Dendritic cell treated with granulocyte-macrophage colony-stimulating factor and Interleukin-4, amounts not matched to agents 40 ng/mL and 50 ng/mL, for 4 days (primary cell): ENCODE measurements at regions of chrX and their contacts with region 1.

Region 1: GRCh38 chrX:123732670-123733363 is at the start of gene THOC2:
- H3K4me3 Mint-ChIP-seq: peak within 1 kb of the TSS; percentile 99
- H3K27ac Mint-ChIP-seq: peak within 1 kb of the TSS; percentile 94
- H3K4me1 Mint-ChIP-seq: peaks cover 22% of the 10 kb centered on the region
- H3K27me3 Mint-ChIP-seq: no peaks in the 10 kb centered on the region

Region 2: DNA sequence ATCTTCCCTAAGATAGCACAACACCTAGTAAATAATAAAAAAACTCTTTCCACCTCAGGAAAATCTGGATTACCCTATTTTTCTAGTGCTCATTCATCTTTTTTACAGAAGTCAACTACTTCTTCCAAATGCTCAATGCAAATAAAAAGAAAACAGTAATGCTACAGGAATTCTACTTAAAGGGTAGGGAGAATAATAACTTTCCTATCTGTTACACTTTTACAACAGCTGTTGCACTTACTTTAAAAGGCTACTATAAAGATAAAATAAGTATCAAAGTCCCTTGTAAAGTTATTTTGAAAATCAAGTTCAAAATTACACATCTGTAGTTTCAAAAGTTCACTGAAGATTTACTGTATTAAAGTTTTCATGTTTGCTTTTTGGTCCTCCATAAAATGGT is 37.6 kb before region 1 on chrX:
- intact Hi-C with region 1: no loop called
- H3K4me3 Mint-ChIP-seq: no peak overlapping the region
- H3K27ac Mint-ChIP-seq: no peak overlapping the region
- H3K4me1 Mint-ChIP-seq: no peaks in the 10 kb centered on the region
- H3K27me3 Mint-ChIP-seq: no peaks in the 10 kb centered on the region

Region 3: DNA sequence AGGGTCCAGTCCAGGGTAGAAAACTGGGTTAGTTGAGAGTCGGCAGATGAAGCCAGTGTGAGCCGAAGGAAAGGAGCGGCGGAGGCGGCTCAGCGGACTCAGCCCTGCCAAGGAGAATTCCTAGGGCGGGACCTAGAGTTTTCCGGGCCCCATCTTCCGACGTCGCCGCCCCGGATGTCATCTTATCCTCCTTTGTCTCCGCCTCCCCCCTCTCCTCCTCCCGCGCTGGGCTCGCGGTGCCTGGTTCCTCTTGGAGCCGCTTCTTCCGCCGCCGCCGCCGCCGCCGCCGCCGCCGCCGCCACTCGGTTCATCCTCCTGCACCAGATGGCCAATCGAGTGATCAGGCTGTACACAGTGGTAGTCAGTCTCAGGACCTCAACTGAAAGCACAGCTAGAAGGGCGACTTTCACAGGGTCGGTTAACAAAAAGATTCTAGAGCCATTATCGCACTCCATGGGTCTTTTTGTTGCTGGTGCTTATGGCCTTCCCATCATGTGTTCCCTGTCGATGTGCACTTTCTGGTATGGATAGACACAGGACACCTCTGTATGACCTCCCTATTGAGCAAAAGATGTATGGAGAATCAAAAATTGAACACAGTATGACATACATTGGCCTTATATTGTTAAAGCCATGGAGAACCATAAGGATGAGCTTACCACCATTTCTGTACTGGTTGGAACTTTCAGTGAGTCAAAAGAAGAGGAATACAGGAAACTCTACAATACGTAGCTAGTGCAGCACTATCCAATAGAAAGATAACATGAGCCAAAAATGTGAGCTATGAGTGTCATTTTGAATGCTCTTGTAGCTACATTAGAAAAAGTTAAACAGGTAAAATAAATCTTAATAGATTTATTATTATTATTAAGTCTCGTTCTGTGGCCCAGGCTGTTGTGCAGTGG is 32.4 kb after region 1 on chrX:
- intact Hi-C with region 1: loop called (anchors 5 kb)
- H3K4me3 Mint-ChIP-seq: peak overlapping the region; percentile 64
- H3K27ac Mint-ChIP-seq: peak overlapping the region; percentile 63
- H3K4me1 Mint-ChIP-seq: peaks cover 5% of the 10 kb centered on the region
- H3K27me3 Mint-ChIP-seq: no peaks in the 10 kb centered on the region

Region 4: GRCh38 chrX:123818243-123818642 is 85.4 kb after region 1 on chrX:
- intact Hi-C with region 1: no loop called
- H3K4me3 Mint-ChIP-seq: no peak overlapping the region
- H3K27ac Mint-ChIP-seq: no peak overlapping the region
- H3K4me1 Mint-ChIP-seq: no peaks in the 10 kb centered on the region
- H3K27me3 Mint-ChIP-seq: no peaks in the 10 kb centered on the region